GM12878 (cell line): ENCODE measurements at regions of chr4 and their contacts with region 1.

Region 1: GRCh38 chr4:98260579-98261290 is 449 bp upstream of the RAP1GDS1 start:
- DNase-seq: peak; percentile 83
- ATAC-seq: peak; percentile 91
- H3K4me3 ChIP-seq: peak overlapping the region; percentile 98
- H3K27ac ChIP-seq: peak overlapping the region; percentile 91
- H3K4me1 ChIP-seq: no peaks in the 10 kb centered on the region
- H3K27me3 ChIP-seq: no peaks in the 10 kb centered on the region
- CTCF ChIP-seq: no peak
- EP300 ChIP-seq: no peak
- POLR2A ChIP-seq: peak; percentile 89
- RAD21 ChIP-seq: no peak

Region 2: DNA sequence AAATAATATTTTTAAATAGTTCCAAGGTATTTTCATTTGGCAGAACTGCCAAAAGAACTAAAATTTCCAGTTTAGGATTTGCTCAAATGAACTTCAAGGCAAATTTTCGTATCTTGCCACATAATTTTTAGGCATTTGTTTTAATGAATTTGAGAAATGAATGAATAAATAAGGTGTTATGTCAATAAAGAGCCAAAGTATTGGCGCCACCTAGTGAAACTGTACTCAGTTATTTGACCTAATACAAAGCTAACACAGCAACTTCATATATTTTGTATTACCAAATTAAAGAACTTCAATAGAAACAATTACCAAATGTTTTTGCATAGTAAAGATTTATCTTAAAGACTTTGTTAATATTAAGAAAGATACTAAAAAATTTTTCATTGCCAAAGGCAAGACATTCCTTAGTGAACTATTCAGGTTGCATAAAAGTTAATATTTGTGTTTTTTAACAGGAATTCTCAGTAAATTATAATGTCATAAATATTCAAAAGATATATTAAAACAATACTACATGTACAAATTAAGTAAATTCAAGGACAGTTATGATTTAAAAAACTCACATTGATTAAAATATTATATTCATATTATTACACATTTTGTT is 167.8 kb before region 1 on chr4:
- CTCF ChIA-PET with region 1: no interaction called
- POLR2A ChIA-PET with region 1: no interaction called
- RAD21 ChIA-PET with region 1: no interaction called
- SMC1A ChIA-PET with region 1: no interaction called
- in situ Hi-C with region 1: no loop called
- intact Hi-C with region 1: no loop called
- DNase-seq: no peak
- ATAC-seq: 0 out of 3 replicates have a peak, but pooled peaks have one; percentile 45
- H3K4me3 ChIP-seq: no peak overlapping the region
- H3K27ac ChIP-seq: no peak overlapping the region
- H3K4me1 ChIP-seq: no peaks in the 10 kb centered on the region
- H3K27me3 ChIP-seq: no peaks in the 10 kb centered on the region
- CTCF ChIP-seq: peak; percentile 36 to 43 (median 39); a peak in 5 of 6 replicates
- EP300 ChIP-seq: no peak
- POLR2A ChIP-seq: no peak
- RAD21 ChIP-seq: peak; percentile 38

Region 3: GRCh38 chr4:98143001-98143899 is 117.5 kb before region 1 on chr4 and contains the start of gene STPG2:
- CTCF ChIA-PET with region 1: interaction called, 6 read pairs
- POLR2A ChIA-PET with region 1: no interaction called
- RAD21 ChIA-PET with region 1: interaction called, 4 read pairs
- SMC1A ChIA-PET with region 1: interaction called, 4 read pairs
- in situ Hi-C with region 1: no loop called
- intact Hi-C with region 1: loop called (anchors 5 kb)
- DNase-seq: peak; percentile 51
- ATAC-seq: peak; percentile 100
- H3K4me3 ChIP-seq: peak within 1 kb of the TSS; percentile 75
- H3K27ac ChIP-seq: peak within 1 kb of the TSS; percentile 92
- H3K4me1 ChIP-seq: peaks cover 3% of the 10 kb centered on the region
- H3K27me3 ChIP-seq: peaks cover 0 to 2% of the 10 kb centered on the region in 2 experiments; a peak in 1 of 4 replicates
- CTCF ChIP-seq: peak; percentile 33 to 55 (median 44)
- EP300 ChIP-seq: no peak
- POLR2A ChIP-seq: peak; percentile 79
- RAD21 ChIP-seq: 0 out of 2 replicates have a peak, but pooled peaks have one; percentile 12
- polyA plus RNA-seq, gene STPG2: not detected

Region 4: GRCh38 chr4:98289375-98289774 is 28.6 kb after region 1 on chr4:
- CTCF ChIA-PET with region 1: interaction called, 3 read pairs
- POLR2A ChIA-PET with region 1: interaction called, 12 read pairs
- RAD21 ChIA-PET with region 1: interaction called, 16 read pairs
- SMC1A ChIA-PET with region 1: interaction called, 4 read pairs
- in situ Hi-C with region 1: no loop called
- intact Hi-C with region 1: no loop called
- DNase-seq: peak; percentile 17
- ATAC-seq: peak; percentile 86
- H3K4me3 ChIP-seq: no peak overlapping the region
- H3K27ac ChIP-seq: peak overlapping the region; percentile 15; the same call in 1 of the 2 replicates
- H3K4me1 ChIP-seq: peaks cover 7% of the 10 kb centered on the region; the same call in 1 of the 2 replicates
- H3K27me3 ChIP-seq: no peaks in the 10 kb centered on the region
- CTCF ChIP-seq: no peak
- EP300 ChIP-seq: no peak
- POLR2A ChIP-seq: no peak
- RAD21 ChIP-seq: no peak

Region 5: DNA sequence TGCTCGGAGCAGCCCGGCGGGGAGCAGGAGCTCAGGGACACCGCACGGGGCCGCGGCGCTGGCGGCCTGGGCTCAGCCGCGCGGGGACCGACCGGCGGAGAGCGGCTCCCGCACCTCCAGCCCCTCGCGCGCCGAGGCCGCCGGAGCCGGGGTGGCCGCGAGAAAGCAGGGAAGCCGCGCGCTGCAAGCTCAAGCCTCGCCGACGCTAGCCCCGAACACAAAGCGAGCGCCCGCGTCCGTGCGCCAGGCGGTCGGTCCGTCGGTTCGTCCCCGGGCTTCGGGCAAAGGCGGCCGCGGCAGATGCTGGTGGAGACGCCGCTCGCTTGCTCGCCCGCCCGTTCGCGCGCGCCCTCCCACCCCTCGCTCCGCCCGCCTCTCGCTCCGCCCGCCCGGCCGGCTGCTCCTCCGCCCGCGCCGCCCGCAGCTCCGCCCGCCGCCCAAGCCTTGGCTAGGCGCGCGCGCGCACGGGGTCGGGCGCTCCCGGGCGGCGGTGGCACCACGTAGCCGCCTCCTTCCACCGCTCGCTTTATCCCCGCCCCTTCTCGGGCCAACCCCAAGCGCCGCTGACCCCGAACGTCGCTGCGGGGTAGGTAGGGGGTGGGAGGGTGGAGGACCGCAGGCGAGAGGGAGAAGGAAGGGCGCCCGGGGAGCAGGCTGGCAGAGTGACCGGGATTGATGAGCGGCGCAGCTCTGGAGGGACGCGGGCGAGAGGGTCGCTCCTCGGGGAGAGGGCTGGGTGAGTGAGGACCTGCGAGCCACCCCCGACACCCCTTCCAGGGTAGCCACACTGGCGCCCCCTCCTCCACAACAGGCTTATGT is 397.8 kb after region 1 on chr4 and contains the start of gene TSPAN5:
- CTCF ChIA-PET with region 1: no interaction called
- POLR2A ChIA-PET with region 1: no interaction called
- RAD21 ChIA-PET with region 1: no interaction called
- SMC1A ChIA-PET with region 1: no interaction called
- in situ Hi-C with region 1: no loop called
- intact Hi-C with region 1: loop called (anchors 10 kb)
- DNase-seq: no peak
- ATAC-seq: peak; percentile 84
- H3K4me3 ChIP-seq: peak within 1 kb of the TSS; percentile 65
- H3K27ac ChIP-seq: no peak within 1 kb of the TSS
- H3K4me1 ChIP-seq: peaks cover 10% of the 10 kb centered on the region
- H3K27me3 ChIP-seq: peaks cover 4 to 23% of the 10 kb centered on the region in 2 experiments
- CTCF ChIP-seq: no peak
- EP300 ChIP-seq: no peak
- POLR2A ChIP-seq: peak; percentile 33; the same call in 1 of the 2 replicates
- RAD21 ChIP-seq: no peak
- polyA plus RNA-seq, gene TSPAN5: 0.22 to 0.23 TPM

Region 6: GRCh38 chr4:99405433-99406115 is 1144.8 kb after region 1 on chr4:
- CTCF ChIA-PET with region 1: no interaction called
- POLR2A ChIA-PET with region 1: no interaction called
- RAD21 ChIA-PET with region 1: no interaction called
- SMC1A ChIA-PET with region 1: no interaction called
- in situ Hi-C with region 1: no loop called
- intact Hi-C with region 1: loop called (anchors 5 kb)
- DNase-seq: peak; percentile 38
- ATAC-seq: peak; percentile 40
- H3K4me3 ChIP-seq: no peak overlapping the region
- H3K27ac ChIP-seq: peak overlapping the region; percentile 28; the same call in 1 of the 2 replicates
- H3K4me1 ChIP-seq: peaks cover 16% of the 10 kb centered on the region
- H3K27me3 ChIP-seq: no peaks in the 10 kb centered on the region
- CTCF ChIP-seq: peak; percentile 86 to 90 (median 87)
- EP300 ChIP-seq: no peak
- POLR2A ChIP-seq: no peak
- RAD21 ChIP-seq: peak; percentile 97